Heart right ventricle (tissue), 16 donors: ENCODE measurements at regions of chr7 and their contacts with region 1.

Region 1: DNA sequence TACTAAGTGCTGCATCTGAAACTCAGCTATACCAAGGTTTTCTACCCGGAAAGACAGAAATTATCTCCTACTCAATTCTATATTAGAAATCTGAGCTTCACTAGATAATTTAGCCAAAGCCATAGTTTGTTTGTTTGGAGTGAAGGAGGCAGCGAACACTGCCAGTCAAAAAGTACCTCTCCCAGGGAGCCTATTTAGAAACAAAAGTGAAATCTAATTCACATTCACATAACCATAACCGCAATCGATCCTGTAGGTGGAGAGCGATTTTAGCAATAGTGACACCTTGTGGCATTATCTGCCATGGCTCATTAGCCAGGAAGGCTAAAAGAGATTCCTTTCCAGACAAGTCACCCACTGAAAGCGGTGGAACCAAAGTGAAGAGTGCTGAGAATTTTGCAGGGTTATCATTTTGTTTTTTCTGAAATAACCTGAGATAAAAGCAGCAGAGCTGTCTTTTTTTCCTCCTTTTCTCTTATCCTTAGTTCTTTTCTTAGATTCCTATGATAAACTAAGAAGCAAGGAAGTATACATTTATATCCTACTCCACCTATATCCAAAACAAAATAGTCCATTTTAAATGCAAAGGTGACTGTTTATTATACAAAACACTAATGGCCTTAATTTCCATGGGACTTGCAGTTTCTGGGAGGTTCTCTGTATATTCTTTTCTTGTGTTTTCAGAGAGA is 83.7 kb upstream of the BET1 start:
- DNase-seq: peak in 1 of 2 donors; percentile 51
- ATAC-seq: peak in 7 of 8 donors; percentile 71 to 84 (median 76)
- H3K4me3 ChIP-seq: peak overlapping the region in 6 of 10 donors; percentile 29 to 42 (median 36)
- H3K27ac ChIP-seq: peak overlapping the region in 2 of 10 donors; percentile 40 to 45
- H3K4me1 ChIP-seq: peaks cover 0 to 18% (median 8%) of the 10 kb centered on the region in 9 donors
- H3K27me3 ChIP-seq: peaks cover 0 to 3% (median 0%) of the 10 kb centered on the region in 7 donors
- CTCF ChIP-seq: peak; percentile 46 to 88 (median 80)

Region 2: DNA sequence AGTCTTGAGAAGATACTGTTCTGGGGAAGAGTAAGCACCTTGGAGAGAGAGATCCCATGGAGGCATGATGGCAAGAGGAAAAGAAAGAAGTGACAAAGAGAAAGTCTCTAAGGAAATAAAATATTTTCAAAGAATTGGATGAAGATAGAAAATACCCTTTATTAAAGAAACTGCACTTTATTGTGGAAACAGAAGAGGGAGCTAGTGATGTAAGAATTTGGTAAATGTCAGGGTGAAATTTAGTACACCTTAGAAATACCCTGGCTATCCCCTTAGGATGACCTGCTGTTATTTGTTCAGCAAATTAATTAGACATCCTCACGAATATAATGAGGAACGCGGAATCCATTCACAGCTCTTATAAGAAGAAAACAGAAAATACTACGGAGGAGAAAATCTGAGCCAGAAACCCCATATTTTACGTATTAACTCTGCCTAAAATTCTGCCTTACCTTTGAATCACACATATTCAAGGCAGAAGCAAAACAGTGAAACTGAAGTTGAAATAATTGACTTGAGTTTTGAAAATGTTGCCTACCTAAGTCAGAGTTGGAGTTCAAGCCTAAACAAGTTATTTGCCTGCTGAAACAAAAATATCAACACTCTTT is 288.0 kb before region 1 on chr7:
- intact Hi-C with region 1: loop called in 3 of 10 experiments (anchors 5 to 10 kb)
- DNase-seq: no peak
- ATAC-seq: no peak
- H3K4me3 ChIP-seq: no peak overlapping the region
- H3K27ac ChIP-seq: no peak overlapping the region
- H3K4me1 ChIP-seq: no peaks in the 10 kb centered on the region
- H3K27me3 ChIP-seq: no peaks in the 10 kb centered on the region
- CTCF ChIP-seq: peak in 8 of 9 donors; percentile 23 to 65 (median 50)

Region 3: GRCh38 chr7:93890464-93891068 is 197.2 kb before region 1 on chr7 and contains the start of gene TFPI2:
- intact Hi-C with region 1: loop called in 2 of 10 experiments (anchors 5 kb)
- DNase-seq: peak; percentile 15 to 47
- ATAC-seq: peak; percentile 62 to 85 (median 79)
- H3K4me3 ChIP-seq: peak within 1 kb of the TSS; percentile 41 to 68 (median 62)
- H3K27ac ChIP-seq: peak within 1 kb of the TSS in 9 of 10 donors; percentile 13 to 66 (median 46)
- H3K4me1 ChIP-seq: peaks cover 0 to 26% (median 11%) of the 10 kb centered on the region in 9 donors
- H3K27me3 ChIP-seq: peaks cover 0 to 33% (median 9%) of the 10 kb centered on the region in 7 donors
- CTCF ChIP-seq: peak in 3 of 9 donors; percentile 18 to 41 (median 24)
- total RNA-seq, gene TFPI2: 1.1 to 13.4 (median 2.2) TPM

Region 4: GRCh38 chr7:94216944-94217461 is 129.2 kb after region 1 on chr7:
- intact Hi-C with region 1: loop called in 3 of 10 experiments (anchors 10 kb)
- DNase-seq: no peak
- ATAC-seq: peak in 1 of 8 donors; percentile 55
- H3K4me3 ChIP-seq: no peak overlapping the region
- H3K27ac ChIP-seq: no peak overlapping the region
- H3K4me1 ChIP-seq: peaks cover 0 to 5% (median 0%) of the 10 kb centered on the region in 9 donors
- H3K27me3 ChIP-seq: no peaks in the 10 kb centered on the region
- CTCF ChIP-seq: no peak

Region 5: DNA sequence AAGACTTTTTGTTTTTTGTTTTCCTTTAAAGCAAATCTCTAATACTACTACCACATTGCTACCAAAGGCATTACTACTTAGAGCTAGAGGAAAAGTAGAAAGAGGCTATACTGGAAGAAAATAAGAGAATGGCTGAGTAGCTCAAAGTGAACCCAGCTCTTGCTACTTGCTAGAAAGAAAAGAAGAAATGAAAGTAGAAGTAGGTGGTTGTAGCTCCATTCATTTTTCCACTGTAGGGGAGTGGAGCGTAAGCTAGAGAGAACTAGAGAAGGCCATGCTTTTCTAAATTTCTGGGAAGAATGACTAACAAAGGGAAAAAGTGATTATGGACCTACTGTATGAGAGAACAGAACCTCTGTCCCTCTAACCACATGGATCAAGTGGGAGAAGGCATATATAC is 1052.1 kb after region 1 on chr7:
- intact Hi-C with region 1: no loop called
- DNase-seq: no peak
- ATAC-seq: no peak
- H3K4me3 ChIP-seq: no peak overlapping the region
- H3K27ac ChIP-seq: no peak overlapping the region
- H3K4me1 ChIP-seq: no peaks in the 10 kb centered on the region
- H3K27me3 ChIP-seq: no peaks in the 10 kb centered on the region
- CTCF ChIP-seq: no peak